ENCODE measurements at regions of chr3 and their contacts with region 1.

Region 1: DNA sequence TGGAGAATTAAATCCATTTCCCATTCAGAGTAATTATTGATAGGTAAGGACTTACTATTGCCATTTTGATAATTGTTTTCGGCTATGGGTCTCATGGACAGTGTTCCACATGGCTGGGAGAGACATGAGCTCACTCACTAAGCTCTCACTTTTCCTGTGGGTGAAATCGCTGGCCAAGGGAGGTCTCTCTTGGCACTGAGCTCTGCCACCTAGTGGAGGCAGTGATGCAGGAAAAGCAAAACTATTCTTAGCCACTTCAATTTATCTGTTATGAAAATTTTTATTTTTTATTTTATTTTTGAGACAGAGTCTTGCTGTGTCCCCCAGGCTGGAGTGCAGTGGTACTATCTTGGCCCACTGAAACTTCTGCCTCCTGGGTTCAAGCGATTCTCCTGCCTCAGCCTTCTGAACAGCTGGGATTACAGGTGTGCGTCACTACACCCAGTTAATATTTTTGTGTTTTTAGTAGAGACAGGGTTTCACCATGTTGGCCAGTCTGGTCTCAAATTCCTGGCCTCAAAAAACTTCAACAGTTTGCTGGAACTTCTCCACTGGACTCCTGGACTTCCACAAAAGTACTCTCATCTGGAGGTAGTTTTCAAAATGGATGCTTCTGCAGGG is 4.7 kb upstream of the RNF13 start:
- DNase-seq: no peak
- H3K4me3 ChIP-seq: no peak overlapping the region
- H3K27ac ChIP-seq: no peak overlapping the region
- H3K4me1 ChIP-seq: peaks cover 4 to 18% (median 10%) of the 10 kb centered on the region in 4 donors
- H3K27me3 ChIP-seq: no peaks in the 10 kb centered on the region
- CTCF ChIP-seq: peak; percentile 81 to 89 (median 82)
- EP300 ChIP-seq: no peak
- POLR2A ChIP-seq: no peak

Region 2: GRCh38 chr3:149512209-149512782 is 296.0 kb before region 1 on chr3:
- intact Hi-C with region 1: loop called (anchors 5 kb)
- DNase-seq: no peak
- H3K4me3 ChIP-seq: no peak overlapping the region
- H3K27ac ChIP-seq: no peak overlapping the region
- H3K4me1 ChIP-seq: peaks cover 3 to 24% (median 17%) of the 10 kb centered on the region in 4 donors
- H3K27me3 ChIP-seq: no peaks in the 10 kb centered on the region
- CTCF ChIP-seq: peak; percentile 82 to 87 (median 84)
- EP300 ChIP-seq: no peak
- POLR2A ChIP-seq: no peak

Region 3: GRCh38 chr3:149765762-149766334 is 42.5 kb before region 1 on chr3:
- intact Hi-C with region 1: loop called (anchors 5 kb)
- DNase-seq: no peak
- H3K4me3 ChIP-seq: no peak overlapping the region
- H3K27ac ChIP-seq: no peak overlapping the region
- H3K4me1 ChIP-seq: peaks cover 0 to 12% (median 9%) of the 10 kb centered on the region in 4 donors
- H3K27me3 ChIP-seq: peaks cover 0 to 7% (median 0%) of the 10 kb centered on the region in 4 donors
- CTCF ChIP-seq: peak; percentile 26 to 47 (median 38)
- EP300 ChIP-seq: no peak
- POLR2A ChIP-seq: no peak

Region 4: GRCh38 chr3:149848238-149848637 is 39.9 kb after region 1 on chr3:
- intact Hi-C with region 1: no loop called
- DNase-seq: no peak
- H3K4me3 ChIP-seq: no peak overlapping the region
- H3K27ac ChIP-seq: no peak overlapping the region
- H3K4me1 ChIP-seq: peaks cover 6 to 17% (median 12%) of the 10 kb centered on the region in 4 donors
- H3K27me3 ChIP-seq: no peaks in the 10 kb centered on the region
- CTCF ChIP-seq: no peak
- EP300 ChIP-seq: no peak
- POLR2A ChIP-seq: no peak

Measured in esophagus muscularis mucosa (tissue), 4 donors.